HepG2 (cell line): ENCODE measurements at regions of chr2 and their contacts with region 1.

Region 1: GRCh38 chr2:231713730-231714430 is 5.6 kb downstream of the PTMA start:
- DNase-seq: peak; percentile 90
- ATAC-seq: peak; percentile 40
- H3K4me3 ChIP-seq: no peak overlapping the region
- H3K27ac ChIP-seq: peak overlapping the region; percentile 37
- H3K4me1 ChIP-seq: peaks cover 67% of the 10 kb centered on the region
- H3K27me3 ChIP-seq: no peaks in the 10 kb centered on the region
- CTCF ChIP-seq: peak; percentile 97
- EP300 ChIP-seq: 0 out of 4 replicates have a peak, but pooled peaks of 1 of the 2 experiments have one; percentile 18
- POLR2A ChIP-seq: peak in 1 of 2 experiments; percentile 82; a peak in 2 of 4 replicates
- RAD21 ChIP-seq: peak; percentile 95

Region 2: DNA sequence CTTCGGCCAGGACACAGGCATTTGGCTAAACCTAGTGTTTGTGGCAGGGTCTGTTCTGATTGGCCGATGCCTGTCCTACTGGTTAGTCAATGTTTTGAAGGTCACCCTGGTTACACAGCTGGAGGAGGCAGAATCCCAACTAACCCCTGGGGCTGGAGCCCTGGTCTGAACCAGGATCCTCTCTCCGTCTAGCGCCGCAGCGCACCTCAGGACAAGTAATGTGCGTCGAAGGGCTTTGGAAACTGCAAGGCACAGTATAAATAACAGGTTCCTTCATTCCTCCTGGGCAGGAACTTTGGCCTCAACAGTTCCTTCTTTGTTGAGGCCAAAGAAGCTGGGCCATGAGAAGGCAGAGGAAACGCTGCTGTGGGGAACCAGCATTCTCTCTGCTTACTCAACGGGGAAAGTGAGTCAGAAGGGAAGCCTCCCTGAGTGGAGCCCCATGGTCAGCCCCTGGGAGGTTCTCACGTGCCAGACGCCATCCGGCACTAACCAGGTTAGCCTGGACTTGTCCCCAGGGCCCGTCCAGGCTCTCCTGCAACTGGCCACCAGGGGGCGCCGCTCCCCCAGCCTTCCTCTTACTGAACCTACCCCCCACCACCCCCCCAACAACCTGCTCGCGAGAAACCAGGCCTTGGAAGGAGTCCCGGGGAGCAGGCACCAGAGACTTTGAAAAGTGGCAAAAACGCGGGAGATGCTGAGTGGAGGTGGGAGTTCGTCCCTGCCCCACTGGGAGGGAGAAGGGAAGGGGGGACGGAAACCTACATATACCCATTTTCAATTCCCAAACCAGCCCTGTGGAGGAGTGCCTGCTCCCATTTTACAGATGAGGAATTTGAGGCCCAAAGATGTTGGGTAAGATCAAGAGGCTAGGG is 101.5 kb before region 1 on chr2:
- CTCF ChIA-PET with region 1: interaction called, 10 read pairs
- POLR2A ChIA-PET with region 1: interaction called, 7 read pairs
- in situ Hi-C with region 1: loop called (anchors 5 kb)
- intact Hi-C with region 1: loop called (anchors 2 kb)
- DNase-seq: peak; percentile 80
- ATAC-seq: peak; percentile 72
- H3K4me3 ChIP-seq: peak overlapping the region in 1 of 3 experiments; percentile 45; a peak in 2 of 6 replicates
- H3K27ac ChIP-seq: peak overlapping the region; percentile 28
- H3K4me1 ChIP-seq: peaks cover 62% of the 10 kb centered on the region
- H3K27me3 ChIP-seq: peaks cover 3 to 8% of the 10 kb centered on the region in 2 experiments; a peak in 2 of 5 replicates
- CTCF ChIP-seq: peak; percentile 96
- EP300 ChIP-seq: no peak
- POLR2A ChIP-seq: no peak
- RAD21 ChIP-seq: peak; percentile 91

Region 3: DNA sequence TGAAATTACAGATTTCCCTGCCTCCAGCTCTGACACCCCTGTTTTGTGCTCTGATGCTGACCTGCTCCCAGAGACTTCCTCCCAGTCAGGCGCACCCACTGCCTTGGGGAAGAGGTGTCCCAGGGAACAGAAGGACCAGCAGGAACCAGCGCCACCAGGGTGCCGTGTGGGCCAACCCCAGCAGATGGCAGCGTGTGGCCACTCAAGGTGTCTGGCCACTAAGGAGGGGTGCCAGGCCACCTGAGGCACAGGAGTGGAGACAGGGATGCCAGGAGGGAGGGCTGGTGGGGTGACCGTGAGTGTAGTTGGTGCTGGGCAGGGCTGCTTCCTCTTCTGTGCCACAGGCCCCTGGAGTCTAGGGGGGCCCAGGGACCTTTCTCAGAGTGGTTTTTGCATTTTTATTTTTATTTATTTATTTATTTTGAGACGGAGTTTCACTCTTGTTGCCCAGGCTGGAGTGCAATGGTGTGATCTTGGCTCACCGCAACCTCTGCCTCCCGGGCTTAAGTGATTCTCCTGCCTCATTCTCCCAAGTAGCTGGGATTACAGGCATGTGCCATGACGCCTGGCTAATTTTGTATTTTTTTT is 65.2 kb before region 1 on chr2:
- CTCF ChIA-PET with region 1: interaction called, 5 read pairs
- POLR2A ChIA-PET with region 1: no interaction called
- in situ Hi-C with region 1: no loop called
- intact Hi-C with region 1: loop called (anchors 1 kb)
- DNase-seq: peak; percentile 65
- ATAC-seq: peak; percentile 95
- H3K4me3 ChIP-seq: no peak overlapping the region
- H3K27ac ChIP-seq: no peak overlapping the region
- H3K4me1 ChIP-seq: no peaks in the 10 kb centered on the region
- H3K27me3 ChIP-seq: peaks cover 2 to 36% of the 10 kb centered on the region in 2 experiments
- CTCF ChIP-seq: peak; percentile 92
- EP300 ChIP-seq: no peak
- POLR2A ChIP-seq: no peak
- RAD21 ChIP-seq: peak; percentile 93

Region 4: GRCh38 chr2:231674587-231675338 is 39.1 kb before region 1 on chr2:
- CTCF ChIA-PET with region 1: interaction called, 82 read pairs
- POLR2A ChIA-PET with region 1: interaction called, 56 read pairs
- in situ Hi-C with region 1: loop called (anchors 5 kb)
- intact Hi-C with region 1: loop called (anchors 1 kb)
- DNase-seq: peak; percentile 69
- ATAC-seq: peak; percentile 63
- H3K4me3 ChIP-seq: peak overlapping the region in 1 of 3 experiments; percentile 51; a peak in 2 of 6 replicates
- H3K27ac ChIP-seq: no peak overlapping the region
- H3K4me1 ChIP-seq: peaks cover 70% of the 10 kb centered on the region
- H3K27me3 ChIP-seq: peaks cover 0 to 7% of the 10 kb centered on the region in 2 experiments; a peak in 1 of 5 replicates
- CTCF ChIP-seq: peak; percentile 98
- EP300 ChIP-seq: no peak
- POLR2A ChIP-seq: no peak
- RAD21 ChIP-seq: peak; percentile 69

Region 5: DNA sequence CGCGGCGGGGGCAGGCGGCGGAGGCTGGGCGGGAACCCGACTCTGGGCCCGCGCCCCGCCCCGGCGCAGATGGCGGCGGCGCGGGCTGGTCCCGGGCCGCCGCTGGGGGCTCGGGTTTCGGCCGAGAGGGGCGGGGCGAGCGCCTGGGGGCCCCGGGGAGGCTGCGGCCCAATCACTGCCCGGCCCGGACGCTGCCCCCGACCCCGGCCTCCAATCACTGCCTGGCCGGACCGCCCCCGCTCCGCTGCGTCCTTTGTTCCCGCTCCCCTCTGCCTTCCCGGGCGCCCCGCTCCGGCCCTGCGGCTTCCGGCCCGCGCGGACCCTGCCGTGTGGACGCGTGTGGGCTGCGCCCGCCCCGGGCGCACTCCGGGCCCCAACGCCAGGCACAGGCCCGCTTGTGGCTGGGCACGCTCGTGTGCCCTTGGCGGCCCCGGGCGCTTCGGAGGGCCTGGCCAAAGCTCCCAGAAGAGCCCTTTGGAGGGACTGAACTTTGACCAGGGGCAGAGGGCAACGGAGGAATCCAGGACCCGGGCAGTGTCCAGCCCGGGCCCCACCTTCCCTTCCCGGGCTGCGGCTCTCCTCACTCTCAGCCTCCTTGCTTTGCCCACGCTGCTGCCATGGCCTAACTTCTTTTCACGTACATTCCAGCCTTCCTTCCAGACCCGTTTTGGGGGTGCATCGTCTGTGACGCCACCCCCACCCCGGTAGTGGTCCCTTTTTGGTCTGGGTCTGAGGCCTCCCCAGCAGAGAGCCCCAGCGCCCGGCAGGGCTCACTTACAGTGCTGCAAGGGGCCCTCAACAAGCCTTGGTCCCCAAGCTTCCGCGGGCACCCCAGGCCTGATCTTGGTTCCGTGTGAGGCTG is 32.7 kb before region 1 on chr2:
- CTCF ChIA-PET with region 1: interaction called, 82 read pairs
- POLR2A ChIA-PET with region 1: interaction called, 56 read pairs
- in situ Hi-C with region 1: loop called (anchors 5 kb)
- intact Hi-C with region 1: loop called (anchors 1 kb)
- DNase-seq: peak; percentile 87
- ATAC-seq: peak; percentile 83
- H3K4me3 ChIP-seq: peak overlapping the region; percentile 63 to 82 (median 66)
- H3K27ac ChIP-seq: peak overlapping the region; percentile 98
- H3K4me1 ChIP-seq: peaks cover 64% of the 10 kb centered on the region
- H3K27me3 ChIP-seq: peaks cover 0 to 10% of the 10 kb centered on the region in 2 experiments; a peak in 1 of 5 replicates
- CTCF ChIP-seq: peak; percentile 11; the same call in 1 of the 2 replicates
- EP300 ChIP-seq: no peak; a peak in 1 of 4 replicates
- POLR2A ChIP-seq: peak in 1 of 2 experiments; percentile 93; a peak in 2 of 4 replicates
- RAD21 ChIP-seq: peak; percentile 77

Region 6: DNA sequence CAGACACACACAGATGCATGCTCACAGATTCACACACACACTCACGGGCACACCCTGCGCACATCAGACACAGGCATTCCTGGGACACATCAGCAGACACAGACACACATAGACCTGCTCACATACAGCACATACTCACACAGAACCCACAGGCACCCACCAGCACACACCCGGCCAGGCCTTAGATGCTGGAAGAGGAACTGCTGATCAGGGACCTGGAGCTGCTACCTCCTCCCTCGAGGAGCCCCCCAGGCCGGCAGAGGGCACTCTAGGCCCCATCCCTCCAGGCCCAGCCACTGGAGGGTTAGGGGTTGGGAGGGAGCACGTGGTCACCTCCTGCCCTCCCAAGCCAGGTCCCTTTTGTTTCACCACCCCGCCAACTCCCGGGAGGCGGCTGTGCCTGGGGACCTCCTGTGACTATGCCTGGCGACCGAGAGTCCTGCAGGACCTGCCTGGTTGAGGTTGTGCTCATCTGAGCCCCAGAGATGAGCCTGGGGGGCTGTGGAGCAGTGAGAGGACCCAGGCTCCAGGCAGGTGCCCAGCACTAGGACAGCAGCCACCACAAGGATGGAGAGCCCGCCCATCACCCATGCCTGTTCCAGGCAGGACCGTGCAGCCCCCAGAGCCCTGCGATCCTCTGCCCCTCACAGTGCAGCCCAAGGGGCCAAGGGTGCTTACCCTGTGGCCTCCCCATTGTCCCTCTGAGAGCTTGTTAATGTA is 26.6 kb before region 1 on chr2:
- CTCF ChIA-PET with region 1: interaction called, 59 read pairs
- POLR2A ChIA-PET with region 1: interaction called, 56 read pairs
- in situ Hi-C with region 1: no loop called
- intact Hi-C with region 1: loop called (anchors 2 kb)
- DNase-seq: peak; percentile 81
- ATAC-seq: peak; percentile 85
- H3K4me3 ChIP-seq: peak overlapping the region in 2 of 3 experiments; percentile 18 to 55; a peak in 2 of 6 replicates
- H3K27ac ChIP-seq: no peak overlapping the region
- H3K4me1 ChIP-seq: peaks cover 53% of the 10 kb centered on the region
- H3K27me3 ChIP-seq: peaks cover 4 to 25% of the 10 kb centered on the region in 2 experiments; a peak in 3 of 5 replicates
- CTCF ChIP-seq: peak; percentile 99
- EP300 ChIP-seq: no peak
- POLR2A ChIP-seq: peak in 1 of 2 experiments; percentile 60; a peak in 2 of 4 replicates
- RAD21 ChIP-seq: peak; percentile 91

Region 7: GRCh38 chr2:231701456-231702373 is 12.2 kb before region 1 on chr2:
- CTCF ChIA-PET with region 1: no interaction called
- POLR2A ChIA-PET with region 1: interaction called, 31 read pairs
- in situ Hi-C with region 1: no loop called
- intact Hi-C with region 1: no loop called
- DNase-seq: peak; percentile 45
- ATAC-seq: peak; percentile 56
- H3K4me3 ChIP-seq: peak overlapping the region; percentile 32 to 67 (median 33)
- H3K27ac ChIP-seq: peak overlapping the region; percentile 28
- H3K4me1 ChIP-seq: peaks cover 53% of the 10 kb centered on the region
- H3K27me3 ChIP-seq: no peaks in the 10 kb centered on the region
- CTCF ChIP-seq: no peak; the same call in 1 of the 2 replicates
- EP300 ChIP-seq: no peak
- POLR2A ChIP-seq: 0 out of 4 replicates have a peak, but pooled peaks of 1 of the 2 experiments have one; percentile 36
- RAD21 ChIP-seq: no peak

Region 8: GRCh38 chr2:231743376-231744116 is 29.7 kb after region 1 on chr2:
- CTCF ChIA-PET with region 1: no interaction called
- POLR2A ChIA-PET with region 1: no interaction called
- in situ Hi-C with region 1: no loop called
- intact Hi-C with region 1: no loop called
- DNase-seq: no peak
- ATAC-seq: peak; percentile 75
- H3K4me3 ChIP-seq: no peak overlapping the region
- H3K27ac ChIP-seq: no peak overlapping the region
- H3K4me1 ChIP-seq: peaks cover 12% of the 10 kb centered on the region
- H3K27me3 ChIP-seq: peaks cover 0 to 11% of the 10 kb centered on the region in 2 experiments; a peak in 3 of 5 replicates
- CTCF ChIP-seq: no peak
- EP300 ChIP-seq: no peak
- POLR2A ChIP-seq: no peak
- RAD21 ChIP-seq: no peak

Region 9: GRCh38 chr2:231985823-231986261 is 272.0 kb after region 1 on chr2:
- CTCF ChIA-PET with region 1: no interaction called
- POLR2A ChIA-PET with region 1: no interaction called
- in situ Hi-C with region 1: no loop called
- intact Hi-C with region 1: no loop called
- DNase-seq: no peak
- ATAC-seq: no peak
- H3K4me3 ChIP-seq: no peak overlapping the region
- H3K27ac ChIP-seq: no peak overlapping the region
- H3K4me1 ChIP-seq: peaks cover 17% of the 10 kb centered on the region
- H3K27me3 ChIP-seq: no peaks in the 10 kb centered on the region
- CTCF ChIP-seq: no peak
- EP300 ChIP-seq: no peak
- POLR2A ChIP-seq: no peak
- RAD21 ChIP-seq: no peak

Region 10: DNA sequence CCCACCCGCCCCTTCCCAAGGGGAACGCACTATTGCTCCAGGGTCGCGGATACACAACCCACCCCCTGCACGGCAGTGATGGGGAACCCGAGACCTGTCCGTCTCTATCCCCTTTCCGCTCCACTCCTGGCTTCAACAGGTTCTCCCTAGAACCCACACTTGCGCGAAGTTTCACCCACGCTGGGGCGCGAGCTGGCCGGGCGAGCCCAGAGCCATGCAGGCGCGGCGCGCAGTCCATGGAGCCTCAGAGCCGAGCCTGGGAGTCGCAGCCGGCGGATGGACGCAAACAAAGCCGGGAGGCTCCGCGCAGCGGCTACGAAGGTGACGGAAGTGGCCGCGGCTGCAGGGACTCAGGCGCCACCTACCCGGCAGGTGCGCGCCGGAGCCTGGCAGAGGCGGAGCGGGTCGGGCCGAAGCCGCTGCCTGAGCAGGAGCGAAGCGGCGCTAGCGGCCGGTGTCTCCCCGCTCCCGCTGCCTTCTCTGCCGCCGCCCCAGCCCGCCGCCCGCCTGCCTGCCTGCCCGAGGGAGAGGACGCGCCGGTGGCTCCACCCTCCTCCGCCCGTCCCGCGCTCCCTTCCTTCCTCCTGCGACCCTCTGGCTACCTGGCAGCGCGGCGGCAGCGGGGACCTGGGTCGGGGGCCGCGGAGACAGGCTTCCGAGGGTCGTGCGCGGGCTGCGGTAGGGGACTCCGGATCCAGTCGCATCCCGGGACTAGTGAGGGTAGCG is 706.7 kb after region 1 on chr2:
- CTCF ChIA-PET with region 1: no interaction called
- POLR2A ChIA-PET with region 1: no interaction called
- in situ Hi-C with region 1: no loop called
- intact Hi-C with region 1: no loop called
- DNase-seq: peak; percentile 16
- ATAC-seq: peak; percentile 83
- H3K4me3 ChIP-seq: peak overlapping the region in 1 of 3 experiments; percentile 48; a peak in 1 of 6 replicates
- H3K27ac ChIP-seq: no peak overlapping the region
- H3K4me1 ChIP-seq: no peaks in the 10 kb centered on the region
- H3K27me3 ChIP-seq: peaks cover 16 to 62% of the 10 kb centered on the region in 2 experiments
- CTCF ChIP-seq: peak; percentile 52
- EP300 ChIP-seq: no peak
- POLR2A ChIP-seq: no peak
- RAD21 ChIP-seq: no peak